ENCODE measurements at regions of chr20 and their contacts with region 1.

Region 1: DNA sequence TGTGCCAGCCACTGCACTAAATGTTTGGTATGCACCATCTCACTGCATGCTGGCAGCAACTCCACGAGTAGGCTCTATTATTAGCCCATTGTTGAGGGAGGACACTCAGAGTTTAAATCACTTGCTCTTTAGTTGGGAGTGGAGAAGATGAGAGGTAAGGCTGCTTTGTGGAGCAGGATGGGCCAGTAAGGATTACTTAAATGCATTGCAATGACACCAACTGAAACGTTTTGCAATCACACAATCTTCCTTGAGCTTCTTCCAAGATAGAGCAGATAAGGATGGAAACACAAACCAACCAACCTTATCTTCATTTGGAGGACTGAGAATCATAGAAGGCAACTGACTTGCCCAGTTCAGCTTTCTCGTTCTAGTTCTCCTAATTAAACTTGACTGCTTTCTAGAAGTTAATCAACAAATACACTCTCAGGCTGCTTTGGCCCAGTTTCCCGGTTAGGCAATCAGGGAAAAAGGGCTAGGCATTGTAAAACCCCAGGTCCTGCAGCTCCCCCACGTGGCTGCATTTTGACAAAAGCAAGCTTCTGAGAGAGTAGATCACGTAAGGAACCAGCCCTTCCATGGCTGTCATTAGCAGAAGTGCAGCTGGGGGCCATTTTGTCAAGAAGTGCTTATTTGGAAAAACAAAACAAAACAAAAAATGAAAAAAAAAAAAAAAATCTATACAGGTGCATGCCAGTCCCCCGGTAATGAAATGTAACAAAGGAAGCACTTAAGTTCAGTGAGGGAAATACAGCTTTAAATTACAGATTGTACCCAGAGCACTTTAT is 130.6 kb downstream of the BCAS1 start:
- DNase-seq: peak; percentile 34 to 76 (median 53)
- H3K4me3 ChIP-seq: no peak overlapping the region
- H3K4me3 Mint-ChIP-seq: no peak overlapping the region
- H3K27ac ChIP-seq: no peak overlapping the region
- H3K27ac Mint-ChIP-seq: peak overlapping the region in 4 of 8 donors; percentile 29 to 44 (median 39)
- H3K4me1 ChIP-seq: peaks cover 16% of the 10 kb centered on the region
- H3K4me1 Mint-ChIP-seq: peaks cover 18 to 55% (median 43%) of the 10 kb centered on the region in 3 donors
- H3K27me3 ChIP-seq: no peaks in the 10 kb centered on the region
- H3K27me3 Mint-ChIP-seq: no peaks in the 10 kb centered on the region

Region 2: GRCh38 chr20:53413186-53413631 is 526.6 kb before region 1 on chr20:
- CTCF ChIA-PET with region 1: interaction called, 13 read pairs
- POLR2A ChIA-PET with region 1: no interaction called
- DNase-seq: peak; percentile 25 to 70 (median 43)
- H3K4me3 ChIP-seq: no peak overlapping the region
- H3K4me3 Mint-ChIP-seq: peak overlapping the region in 2 of 7 donors; percentile 9 to 30
- H3K27ac ChIP-seq: no peak overlapping the region
- H3K27ac Mint-ChIP-seq: peak overlapping the region in 4 of 8 donors; percentile 62 to 83 (median 78)
- H3K4me1 ChIP-seq: no peaks in the 10 kb centered on the region
- H3K4me1 Mint-ChIP-seq: peaks cover 0 to 5% (median 4%) of the 10 kb centered on the region in 3 donors
- H3K27me3 ChIP-seq: no peaks in the 10 kb centered on the region
- H3K27me3 Mint-ChIP-seq: peaks cover 0 to 10% of the 10 kb centered on the region in 2 donors

Region 3: DNA sequence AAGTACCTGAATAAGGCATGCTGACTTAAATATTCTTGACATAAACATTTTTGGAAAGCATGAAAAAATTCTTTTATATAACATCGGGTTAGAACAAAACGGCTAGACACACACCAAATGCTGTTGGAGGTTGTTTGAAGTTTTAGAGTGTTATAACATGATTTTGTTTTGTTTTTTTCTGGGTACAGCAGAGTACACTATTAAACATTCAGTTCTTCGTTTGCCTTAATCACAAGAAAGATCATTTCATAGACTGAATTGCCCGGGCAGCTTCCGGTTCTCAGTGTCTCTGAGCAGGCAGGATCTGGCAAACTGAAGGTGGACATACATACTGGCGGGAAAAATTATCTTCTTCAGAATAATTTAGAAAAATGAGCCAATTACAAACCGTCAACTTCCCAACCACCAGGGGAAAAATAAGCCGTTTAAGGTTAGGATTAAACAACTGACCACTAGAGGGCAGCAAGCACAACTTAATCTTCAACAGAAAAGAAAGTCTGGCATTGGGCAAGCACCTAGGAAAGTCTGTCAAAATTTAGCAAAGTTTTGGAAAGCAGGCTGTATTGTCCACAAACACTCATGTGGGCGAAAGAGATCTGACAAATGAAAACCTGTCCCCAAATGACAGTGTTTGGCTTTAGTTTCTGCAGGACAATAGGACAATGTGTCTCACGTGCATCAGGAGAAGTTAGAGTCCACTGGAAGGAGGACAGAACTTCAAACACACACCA is 361.1 kb before region 1 on chr20:
- CTCF ChIA-PET with region 1: interaction called, 10 read pairs
- POLR2A ChIA-PET with region 1: interaction called, 5 read pairs
- DNase-seq: peak; percentile 31 to 82 (median 73)
- H3K4me3 ChIP-seq: peak overlapping the region; percentile 61
- H3K4me3 Mint-ChIP-seq: peak overlapping the region; percentile 84 to 98 (median 89)
- H3K27ac ChIP-seq: peak overlapping the region; percentile 68
- H3K27ac Mint-ChIP-seq: peak overlapping the region; percentile 75 to 96 (median 92)
- H3K4me1 ChIP-seq: peaks cover 86% of the 10 kb centered on the region
- H3K4me1 Mint-ChIP-seq: peaks cover 82 to 94% (median 84%) of the 10 kb centered on the region in 3 donors
- H3K27me3 ChIP-seq: no peaks in the 10 kb centered on the region
- H3K27me3 Mint-ChIP-seq: no peaks in the 10 kb centered on the region

Region 4: GRCh38 chr20:53891306-53891944 is 48.3 kb before region 1 on chr20:
- CTCF ChIA-PET with region 1: no interaction called
- POLR2A ChIA-PET with region 1: no interaction called
- DNase-seq: no peak
- H3K4me3 ChIP-seq: no peak overlapping the region
- H3K4me3 Mint-ChIP-seq: no peak overlapping the region
- H3K27ac ChIP-seq: no peak overlapping the region
- H3K27ac Mint-ChIP-seq: no peak overlapping the region
- H3K4me1 ChIP-seq: peaks cover 17% of the 10 kb centered on the region
- H3K4me1 Mint-ChIP-seq: peaks cover 25 to 56% (median 52%) of the 10 kb centered on the region in 3 donors
- H3K27me3 ChIP-seq: no peaks in the 10 kb centered on the region
- H3K27me3 Mint-ChIP-seq: no peaks in the 10 kb centered on the region

Region 5: GRCh38 chr20:53926428-53927028 is 13.2 kb before region 1 on chr20:
- CTCF ChIA-PET with region 1: interaction called, 12 read pairs
- POLR2A ChIA-PET with region 1: interaction called, 4 read pairs
- DNase-seq: no peak
- H3K4me3 ChIP-seq: no peak overlapping the region
- H3K4me3 Mint-ChIP-seq: no peak overlapping the region
- H3K27ac ChIP-seq: no peak overlapping the region
- H3K27ac Mint-ChIP-seq: peak overlapping the region in 2 of 8 donors; percentile 9 to 84
- H3K4me1 ChIP-seq: no peaks in the 10 kb centered on the region
- H3K4me1 Mint-ChIP-seq: peaks cover 16 to 28% (median 26%) of the 10 kb centered on the region in 3 donors
- H3K27me3 ChIP-seq: no peaks in the 10 kb centered on the region
- H3K27me3 Mint-ChIP-seq: no peaks in the 10 kb centered on the region

Region 6: DNA sequence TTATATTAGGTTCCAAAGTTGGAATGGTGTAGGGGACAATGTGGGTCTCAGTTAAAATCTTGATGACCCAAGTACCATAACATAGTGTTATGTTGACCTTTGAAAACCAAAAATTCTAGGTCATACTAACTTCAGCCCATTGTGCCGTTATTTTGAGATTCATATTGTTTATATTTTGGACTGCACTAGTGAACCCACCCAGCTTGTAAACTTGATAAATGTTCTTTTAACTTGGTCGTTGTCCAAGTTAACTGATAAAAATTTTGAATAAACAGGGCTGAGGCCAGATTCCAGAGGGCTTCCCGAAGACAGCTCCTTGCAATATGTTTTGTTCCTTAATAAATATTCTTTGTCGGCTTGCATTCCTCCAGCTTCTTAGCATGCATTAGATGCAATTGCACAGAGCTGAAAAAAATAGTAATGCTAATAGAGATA is 40.3 kb after region 1 on chr20:
- CTCF ChIA-PET with region 1: no interaction called
- POLR2A ChIA-PET with region 1: no interaction called
- DNase-seq: no peak
- H3K4me3 ChIP-seq: no peak overlapping the region
- H3K4me3 Mint-ChIP-seq: no peak overlapping the region
- H3K27ac ChIP-seq: no peak overlapping the region
- H3K27ac Mint-ChIP-seq: no peak overlapping the region
- H3K4me1 ChIP-seq: no peaks in the 10 kb centered on the region
- H3K4me1 Mint-ChIP-seq: peaks cover 0 to 6% (median 0%) of the 10 kb centered on the region in 3 donors
- H3K27me3 ChIP-seq: no peaks in the 10 kb centered on the region
- H3K27me3 Mint-ChIP-seq: peaks cover 7 to 32% of the 10 kb centered on the region in 2 donors

Measured in CD8-positive, alpha-beta memory T cell (primary cell).